Esophagus squamous epithelium (tissue), 5 donors: ENCODE measurements at regions of chr6 and their contacts with region 1.

Region 1: GRCh38 chr6:26342106-26343004 is 22.6 kb upstream of the BTN3A2 start:
- DNase-seq: no peak
- H3K4me3 ChIP-seq: peak overlapping the region in 3 of 4 donors; percentile 5 to 14 (median 10)
- H3K27ac ChIP-seq: no peak overlapping the region
- H3K4me1 ChIP-seq: peaks cover 0 to 3% (median 0%) of the 10 kb centered on the region in 3 donors
- H3K27me3 ChIP-seq: peaks cover 0 to 25% (median 0%) of the 10 kb centered on the region in 4 donors
- CTCF ChIP-seq: no peak
- POLR2A ChIP-seq: no peak

Region 2: DNA sequence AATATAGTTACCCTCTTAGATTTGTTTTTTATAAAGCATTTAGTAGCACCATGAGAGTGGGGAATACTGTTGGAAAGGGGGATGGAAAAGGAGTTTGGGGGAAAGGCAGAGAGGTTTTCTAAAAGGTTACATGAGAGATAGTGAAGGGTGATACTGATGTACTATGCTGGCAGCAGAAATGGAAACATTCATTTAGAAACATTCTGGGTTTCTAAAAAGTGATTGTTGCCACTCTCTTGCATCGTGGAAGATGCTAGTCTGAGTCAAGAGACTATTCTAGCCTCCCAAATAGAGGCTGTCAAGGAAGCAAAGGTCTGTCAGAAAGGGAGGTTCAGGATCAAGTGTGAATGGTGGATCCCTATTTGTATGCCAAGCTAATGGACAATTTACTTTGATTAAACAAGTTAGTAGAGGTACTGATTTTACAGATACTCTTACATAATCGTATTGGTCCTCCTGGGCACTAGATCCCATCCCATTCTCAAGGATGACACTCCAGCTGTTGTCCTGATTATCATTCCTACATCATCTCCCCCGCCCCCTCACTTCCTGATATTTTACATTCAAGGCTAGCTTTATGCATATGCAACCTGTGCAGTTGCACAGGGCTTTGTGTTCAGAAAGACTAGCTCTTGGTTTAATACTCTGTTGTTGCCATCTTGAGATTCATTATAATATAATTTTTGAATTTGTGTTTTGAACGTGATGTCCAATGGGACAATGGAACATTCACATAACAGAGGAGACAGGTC is 239.0 kb after region 1 on chr6:
- intact Hi-C with region 1: loop called (anchors 10 kb)
- DNase-seq: no peak
- H3K4me3 ChIP-seq: no peak overlapping the region
- H3K27ac ChIP-seq: no peak overlapping the region
- H3K4me1 ChIP-seq: peaks cover 0 to 13% (median 0%) of the 10 kb centered on the region in 3 donors
- H3K27me3 ChIP-seq: peaks cover 0 to 93% (median 0%) of the 10 kb centered on the region in 4 donors
- CTCF ChIP-seq: no peak
- POLR2A ChIP-seq: no peak